Heart right ventricle (tissue), 16 donors: ENCODE measurements at regions of chr5 and their contacts with region 1.

Region 1: GRCh38 chr5:97986069-97986468 is 787.4 kb upstream of the RGMB start:
- DNase-seq: no peak
- ATAC-seq: no peak
- H3K4me3 ChIP-seq: no peak overlapping the region
- H3K27ac ChIP-seq: no peak overlapping the region
- H3K4me1 ChIP-seq: no peaks in the 10 kb centered on the region
- H3K27me3 ChIP-seq: peaks cover 0 to 3% (median 0%) of the 10 kb centered on the region in 7 donors
- CTCF ChIP-seq: peak in 4 of 9 donors; percentile 7 to 17 (median 12)

Region 2: GRCh38 chr5:97923496-97923895 is 62.6 kb before region 1 on chr5:
- intact Hi-C with region 1: loop called in 1 of 10 experiments (anchors 10 kb)
- DNase-seq: no peak
- ATAC-seq: no peak
- H3K4me3 ChIP-seq: no peak overlapping the region
- H3K27ac ChIP-seq: no peak overlapping the region
- H3K4me1 ChIP-seq: no peaks in the 10 kb centered on the region
- H3K27me3 ChIP-seq: no peaks in the 10 kb centered on the region
- CTCF ChIP-seq: no peak

Region 3: DNA sequence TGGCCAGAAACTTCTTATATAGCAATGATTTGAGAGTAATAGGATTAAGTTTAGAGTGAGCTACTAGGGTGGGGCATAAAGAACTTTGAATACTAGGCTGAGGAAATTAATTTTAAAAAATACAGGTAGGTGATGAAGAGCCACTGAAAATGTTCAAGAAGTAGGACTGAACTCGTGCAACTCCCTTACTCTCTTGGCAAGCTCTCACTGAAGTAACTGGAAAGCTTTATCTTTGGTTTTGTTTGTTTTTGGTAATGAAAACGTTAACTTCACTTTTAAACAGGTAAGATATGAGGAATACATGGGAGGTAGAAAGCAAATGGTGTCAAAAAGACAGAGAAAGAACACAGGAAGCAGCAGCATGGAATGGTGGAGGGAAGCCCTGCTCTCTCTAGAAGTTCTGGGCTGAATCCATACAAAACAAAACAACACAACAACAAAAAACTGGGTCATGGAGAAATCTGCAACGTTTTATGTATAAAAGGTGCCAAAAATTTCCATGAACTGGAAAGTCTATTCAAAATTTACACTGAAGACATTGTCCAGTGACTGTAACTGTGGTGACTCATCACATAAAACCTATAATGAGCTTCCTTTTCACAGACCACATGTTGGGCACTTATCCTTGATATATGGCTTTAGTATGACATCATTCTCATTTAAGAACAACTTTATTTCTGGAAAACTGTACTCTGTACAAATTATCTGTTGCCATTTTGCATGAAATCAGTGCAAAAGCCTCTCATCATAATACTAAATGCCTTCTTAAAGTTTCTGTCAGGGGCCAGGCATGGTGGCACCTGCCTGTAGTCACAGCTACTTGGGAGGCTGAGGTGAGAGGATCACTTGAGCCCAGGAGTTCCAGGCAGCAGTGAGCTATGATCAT is 1034.0 kb after region 1 on chr5:
- intact Hi-C with region 1: no loop called
- DNase-seq: no peak
- ATAC-seq: peak in 1 of 8 donors; percentile 55
- H3K4me3 ChIP-seq: no peak overlapping the region
- H3K27ac ChIP-seq: no peak overlapping the region
- H3K4me1 ChIP-seq: peaks cover 0 to 20% (median 0%) of the 10 kb centered on the region in 9 donors
- H3K27me3 ChIP-seq: no peaks in the 10 kb centered on the region
- CTCF ChIP-seq: no peak